Dorsolateral prefrontal cortex (tissue), 120 donors: ENCODE measurements at regions of chr16 and their contacts with region 1.

Region 1: DNA sequence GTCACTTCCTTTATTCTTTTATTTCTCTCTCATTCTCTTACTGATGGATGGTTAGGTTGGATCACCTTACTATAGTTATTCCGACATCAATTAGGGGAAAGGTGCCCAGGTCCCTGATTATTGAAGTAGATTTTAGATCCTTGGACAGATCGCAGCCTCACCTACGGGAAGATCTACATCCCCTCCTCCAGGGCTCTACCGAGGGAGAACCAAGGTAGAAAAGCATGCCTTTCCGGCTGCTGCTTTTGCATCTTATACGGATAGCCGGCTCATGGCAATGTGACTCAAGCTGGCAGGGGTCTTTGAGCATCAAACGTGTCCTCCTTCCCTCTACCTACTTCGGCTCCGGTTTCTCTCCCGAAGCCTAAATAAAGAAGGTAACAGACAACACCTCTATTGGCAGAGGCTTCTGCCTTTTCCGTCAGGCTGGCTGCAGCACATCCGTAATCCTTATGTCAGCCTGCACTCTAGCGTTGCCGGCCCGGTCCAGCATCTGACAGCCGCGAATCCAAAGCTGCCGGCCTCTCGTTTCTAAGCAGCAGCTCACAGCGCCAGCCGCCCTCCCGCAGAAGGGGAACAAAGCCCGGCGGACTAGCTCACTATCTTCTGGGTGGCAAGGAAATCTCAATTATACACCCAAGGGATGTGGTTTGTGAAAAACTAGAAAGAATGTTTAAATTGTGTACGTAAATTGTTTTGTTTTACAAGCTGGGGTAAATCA is 46.9 kb downstream of the IRX6 start:
- DNase-seq: peak; percentile 55 to 88 (median 78)
- H3K4me3 ChIP-seq: peak overlapping the region in 46 of 59 donors; percentile 0 to 54 (median 31)
- H3K27ac ChIP-seq: no peak overlapping the region
- H3K27me3 ChIP-seq: peaks cover 0 to 47% (median 16%) of the 10 kb centered on the region in 45 donors
- CTCF ChIP-seq: peak in 54 of 56 donors; percentile 29 to 77 (median 60)

Region 2: DNA sequence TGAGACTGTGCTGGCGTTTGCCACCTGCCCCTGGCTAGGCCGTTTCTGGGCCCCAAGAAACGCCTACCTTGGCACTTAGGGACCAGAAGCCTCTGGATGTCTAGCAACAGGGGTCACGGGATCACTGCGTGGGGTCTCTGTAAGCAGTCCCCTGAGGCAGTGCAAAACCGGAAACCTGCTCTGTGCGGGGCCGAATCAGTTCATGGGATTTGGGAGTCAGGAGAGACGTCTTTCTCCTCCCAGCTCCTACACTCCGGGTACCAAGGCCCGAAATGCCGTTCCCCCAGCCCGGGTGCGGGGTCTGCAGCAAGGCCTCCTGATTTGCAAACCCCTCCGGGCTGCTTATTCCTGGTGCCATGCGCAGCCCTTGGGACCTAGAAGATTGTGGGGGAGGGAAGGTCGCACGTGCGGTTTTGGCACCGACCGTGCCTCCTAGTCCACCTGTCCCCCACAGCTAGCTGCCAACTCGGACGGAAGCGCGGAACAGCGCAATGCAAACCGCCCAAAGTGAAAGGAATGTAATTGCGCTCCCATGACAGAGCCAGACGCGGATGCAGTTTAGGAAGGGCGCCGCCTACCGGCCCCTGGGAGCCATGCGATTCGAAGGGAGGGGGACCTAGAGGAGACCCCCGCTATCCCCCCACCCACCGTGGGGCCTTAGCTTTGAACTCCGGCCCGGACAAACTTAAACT is 433.8 kb before region 1 on chr16:
- intact Hi-C with region 1: loop called in 1 of 2 experiments (anchors 5 kb)
- DNase-seq: no peak
- H3K4me3 ChIP-seq: peak overlapping the region in 40 of 59 donors; percentile 0 to 61 (median 28)
- H3K27ac ChIP-seq: peak overlapping the region in 1 of 59 donors; percentile 2
- H3K27me3 ChIP-seq: peaks cover 18 to 99% (median 86%) of the 10 kb centered on the region in 45 donors
- CTCF ChIP-seq: peak in 43 of 56 donors; percentile 12 to 57 (median 40)